MCF 10A (cell line): ENCODE measurements at regions of chr7 and their contacts with region 1.

Region 1: GRCh38 chr7:66681491-66682349 is 53.0 kb downstream of the KCTD7 start:
- DNase-seq: peak; percentile 95
- H3K4me3 Mint-ChIP-seq: peak overlapping the region; percentile 85
- H3K27ac Mint-ChIP-seq: peak overlapping the region; percentile 95
- H3K4me1 Mint-ChIP-seq: peaks cover 10% of the 10 kb centered on the region
- H3K27me3 Mint-ChIP-seq: no peaks in the 10 kb centered on the region
- CTCF ChIP-seq: no peak

Region 2: GRCh38 chr7:66443946-66444345 is 237.8 kb before region 1 on chr7:
- CTCF ChIA-PET with region 1: no interaction called
- POLR2A ChIA-PET with region 1: no interaction called
- intact Hi-C with region 1: no loop called
- DNase-seq: no peak
- H3K4me3 Mint-ChIP-seq: no peak overlapping the region
- H3K27ac Mint-ChIP-seq: no peak overlapping the region
- H3K4me1 Mint-ChIP-seq: no peaks in the 10 kb centered on the region
- H3K27me3 Mint-ChIP-seq: no peaks in the 10 kb centered on the region
- CTCF ChIP-seq: no peak

Region 3: GRCh38 chr7:66591799-66592596 is 89.7 kb before region 1 on chr7:
- CTCF ChIA-PET with region 1: no interaction called
- POLR2A ChIA-PET with region 1: interaction called, 22 read pairs
- intact Hi-C with region 1: no loop called
- DNase-seq: peak; percentile 94
- H3K4me3 Mint-ChIP-seq: peak overlapping the region; percentile 94
- H3K27ac Mint-ChIP-seq: peak overlapping the region; percentile 98
- H3K4me1 Mint-ChIP-seq: peaks cover 27% of the 10 kb centered on the region
- H3K27me3 Mint-ChIP-seq: no peaks in the 10 kb centered on the region
- CTCF ChIP-seq: no peak

Region 4: GRCh38 chr7:66628361-66629140 is 53.2 kb before region 1 on chr7 and contains the start of gene KCTD7:
- CTCF ChIA-PET with region 1: no interaction called
- POLR2A ChIA-PET with region 1: interaction called, 13 read pairs
- intact Hi-C with region 1: no loop called
- DNase-seq: peak; percentile 96
- H3K4me3 Mint-ChIP-seq: peak within 1 kb of the TSS; percentile 79
- H3K27ac Mint-ChIP-seq: peak within 1 kb of the TSS; percentile 84
- H3K4me1 Mint-ChIP-seq: peaks cover 16% of the 10 kb centered on the region
- H3K27me3 Mint-ChIP-seq: no peaks in the 10 kb centered on the region
- CTCF ChIP-seq: no peak
- total RNA-seq, gene KCTD7: 3.7 and 5.5 TPM in 2 replicates

Region 5: GRCh38 chr7:66886152-66886551 is 204.4 kb after region 1 on chr7:
- CTCF ChIA-PET with region 1: no interaction called
- POLR2A ChIA-PET with region 1: no interaction called
- intact Hi-C with region 1: no loop called
- DNase-seq: no peak
- H3K4me3 Mint-ChIP-seq: no peak overlapping the region
- H3K27ac Mint-ChIP-seq: no peak overlapping the region
- H3K4me1 Mint-ChIP-seq: peaks cover 4% of the 10 kb centered on the region
- H3K27me3 Mint-ChIP-seq: no peaks in the 10 kb centered on the region
- CTCF ChIP-seq: no peak